CD4-positive, alpha-beta T cell (primary cell): ENCODE measurements at regions of chr19 and their contacts with region 1.

Region 1: DNA sequence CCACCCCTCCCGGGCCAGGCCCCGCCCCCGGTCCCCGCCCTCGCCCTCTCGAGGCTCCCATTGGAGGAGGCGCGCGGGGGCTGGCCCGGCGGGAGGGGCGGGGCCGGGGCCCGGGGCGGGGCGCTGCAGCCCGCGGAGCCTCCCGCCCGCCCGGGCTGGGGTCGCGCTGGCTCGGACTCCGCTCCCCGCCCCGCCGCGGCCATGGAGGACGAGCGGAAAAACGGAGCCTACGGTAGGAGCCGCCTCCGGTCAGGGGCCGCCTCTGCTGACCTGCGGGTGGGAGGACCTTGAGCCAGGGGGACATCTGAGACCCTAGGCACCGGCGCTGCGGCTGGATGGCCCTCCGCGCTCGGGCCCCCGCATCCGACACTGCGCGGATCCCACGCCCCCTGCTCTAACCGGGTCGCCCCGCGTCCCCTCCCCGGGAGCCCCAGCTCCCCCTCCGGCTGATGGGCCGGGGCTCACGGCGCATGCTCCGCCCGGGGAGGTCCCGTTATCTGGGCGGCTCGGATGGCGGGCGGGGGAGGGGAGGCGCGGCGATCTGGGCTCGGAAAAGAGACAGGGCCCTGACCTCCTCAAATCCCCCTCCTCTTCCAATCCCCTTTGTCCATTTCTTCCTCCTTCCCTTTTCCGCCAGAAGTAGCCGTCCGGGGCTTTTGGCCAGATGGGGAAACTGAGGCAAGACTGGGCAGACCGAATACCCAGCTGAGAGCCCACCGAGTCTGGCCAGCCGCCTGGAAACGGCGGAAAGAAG is 15.4 kb upstream of the AP1M2 start:
- DNase-seq: peak; percentile 79 to 96 (median 88)
- ATAC-seq: peak; percentile 79
- H3K4me3 ChIP-seq: peak overlapping the region; percentile 96
- H3K4me3 Mint-ChIP-seq: peak overlapping the region; percentile 100
- H3K27ac ChIP-seq: peak overlapping the region; percentile 99 to 100
- H3K27ac Mint-ChIP-seq: peak overlapping the region; percentile 95
- H3K4me1 ChIP-seq: peaks cover 44% of the 10 kb centered on the region
- H3K4me1 Mint-ChIP-seq: peaks cover 35% of the 10 kb centered on the region
- H3K27me3 ChIP-seq: no peaks in the 10 kb centered on the region
- H3K27me3 Mint-ChIP-seq: no peaks in the 10 kb centered on the region
- CTCF ChIP-seq: no peak

Region 2: DNA sequence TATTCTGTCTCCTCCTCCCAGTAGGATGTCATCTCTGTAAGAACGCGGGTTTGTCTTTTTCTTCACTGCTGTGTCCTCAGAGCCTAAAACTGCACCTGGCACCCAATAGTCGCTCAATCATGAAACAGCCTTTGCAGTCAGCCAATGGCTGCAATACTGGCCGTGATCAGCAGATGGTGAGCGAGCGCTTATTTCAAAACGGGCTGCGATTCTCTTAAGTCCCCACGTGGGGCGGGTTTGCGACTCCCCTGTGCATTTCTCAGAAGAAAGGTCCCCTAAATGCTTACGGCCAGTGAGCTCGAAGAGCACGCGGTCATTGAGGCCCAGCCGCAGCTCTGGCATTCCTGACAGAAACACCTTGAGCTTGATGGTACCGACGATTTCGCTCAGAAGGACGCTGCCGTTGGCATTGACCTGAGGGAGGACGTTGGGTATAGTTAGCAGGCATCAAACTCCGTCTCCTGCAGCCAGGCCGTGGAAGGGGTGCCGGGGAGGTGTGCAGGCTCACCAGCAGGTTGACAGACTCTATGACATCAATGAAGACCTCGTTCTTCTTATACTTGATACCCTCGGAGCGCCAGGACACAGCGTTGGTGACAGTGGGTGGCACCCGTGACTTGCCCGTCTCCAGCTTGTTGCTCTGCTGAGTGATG is 21.4 kb before region 1 on chr19:
- CTCF ChIA-PET with region 1: interaction called, 24 read pairs
- POLR2A ChIA-PET with region 1: interaction called, 27 read pairs
- intact Hi-C with region 1: loop called (anchors 1 to 2 kb)
- DNase-seq: peak; percentile 81 to 95 (median 89)
- ATAC-seq: peak; percentile 97
- H3K4me3 ChIP-seq: no peak overlapping the region
- H3K4me3 Mint-ChIP-seq: no peak overlapping the region
- H3K27ac ChIP-seq: no peak overlapping the region
- H3K27ac Mint-ChIP-seq: no peak overlapping the region
- H3K4me1 ChIP-seq: peaks cover 18% of the 10 kb centered on the region
- H3K4me1 Mint-ChIP-seq: peaks cover 25% of the 10 kb centered on the region
- H3K27me3 ChIP-seq: no peaks in the 10 kb centered on the region
- H3K27me3 Mint-ChIP-seq: no peaks in the 10 kb centered on the region
- CTCF ChIP-seq: peak; percentile 99

Region 3: DNA sequence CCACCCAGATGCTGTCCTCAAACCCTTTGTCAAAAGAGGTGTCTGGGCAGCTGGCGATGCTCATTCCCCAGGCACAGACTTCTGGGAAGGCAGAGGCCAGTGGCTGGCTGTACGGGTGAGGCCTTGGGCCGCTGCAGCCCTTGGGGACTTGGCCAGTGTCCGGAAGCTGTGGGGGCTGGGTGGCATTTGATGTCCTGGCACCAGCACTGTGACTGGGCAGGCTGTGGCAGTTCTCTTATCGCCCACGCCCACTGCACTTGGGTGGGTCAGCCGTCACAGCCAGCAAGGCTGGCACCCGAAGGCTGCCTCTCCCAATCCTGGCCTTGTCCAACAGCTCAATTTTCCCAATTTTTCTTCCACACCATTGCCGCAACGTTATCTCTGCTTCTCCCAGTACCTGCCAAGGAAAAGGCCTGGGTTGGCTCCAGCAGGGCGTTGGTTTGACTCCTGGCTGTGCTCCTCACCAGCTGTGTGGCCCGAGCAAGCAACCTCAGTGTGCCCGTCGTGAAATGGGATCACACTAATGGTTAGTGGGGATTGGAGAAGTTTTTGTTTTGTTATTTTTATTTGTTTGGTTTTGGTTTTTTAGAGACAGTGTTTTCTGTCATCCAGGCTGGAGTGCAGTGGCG is 10.1 kb after region 1 on chr19:
- CTCF ChIA-PET with region 1: no interaction called
- POLR2A ChIA-PET with region 1: interaction called, 27 read pairs
- intact Hi-C with region 1: no loop called
- DNase-seq: no peak
- ATAC-seq: no peak
- H3K4me3 ChIP-seq: no peak overlapping the region
- H3K4me3 Mint-ChIP-seq: no peak overlapping the region
- H3K27ac ChIP-seq: peak overlapping the region in 1 of 2 donors; percentile 2
- H3K27ac Mint-ChIP-seq: peak overlapping the region; percentile 49
- H3K4me1 ChIP-seq: peaks cover 52% of the 10 kb centered on the region
- H3K4me1 Mint-ChIP-seq: peaks cover 28% of the 10 kb centered on the region
- H3K27me3 ChIP-seq: no peaks in the 10 kb centered on the region
- H3K27me3 Mint-ChIP-seq: no peaks in the 10 kb centered on the region
- CTCF ChIP-seq: no peak

Region 4: DNA sequence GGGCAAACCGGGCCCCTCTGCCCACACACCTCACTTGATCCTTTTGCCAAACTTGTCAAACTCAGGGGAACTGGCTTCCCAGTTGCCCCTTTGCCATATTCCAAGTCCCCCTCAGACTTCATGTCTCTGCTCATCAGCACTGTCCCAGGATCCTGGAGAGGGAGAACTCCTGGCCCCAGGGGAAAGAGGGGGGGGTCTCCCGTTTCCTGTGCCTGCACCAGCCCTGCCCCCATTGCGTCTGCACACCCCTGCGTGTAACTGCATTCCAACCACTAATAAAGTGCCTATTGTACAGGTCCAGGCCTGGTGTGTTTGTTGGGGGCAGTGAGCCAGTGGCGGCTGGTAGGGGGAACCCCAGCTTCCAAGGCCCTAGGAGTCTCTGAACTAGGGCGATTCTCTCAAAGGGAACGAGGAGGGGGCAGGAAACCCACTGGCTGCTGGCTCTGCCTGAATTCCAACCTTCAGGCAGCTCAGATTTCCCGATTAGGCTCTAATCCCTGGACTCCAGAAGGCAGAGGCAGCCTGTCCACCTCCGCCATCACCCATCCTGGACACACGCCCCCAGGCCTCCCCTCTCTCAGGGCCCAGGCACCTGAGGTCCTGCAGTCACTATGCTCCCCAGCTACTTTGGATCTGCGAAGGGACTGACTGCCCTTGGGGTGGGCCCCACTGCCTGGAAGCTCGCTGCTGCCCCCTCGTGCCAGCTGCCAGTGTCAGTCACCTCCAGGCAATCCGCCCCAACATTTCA is 41.9 kb after region 1 on chr19:
- CTCF ChIA-PET with region 1: interaction called, 27 read pairs
- POLR2A ChIA-PET with region 1: interaction called, 82 read pairs
- intact Hi-C with region 1: loop called in 1 of 2 experiments (anchors 5 kb)
- DNase-seq: peak; percentile 79 to 91 (median 84)
- ATAC-seq: peak; percentile 97
- H3K4me3 ChIP-seq: no peak overlapping the region
- H3K4me3 Mint-ChIP-seq: peak overlapping the region; percentile 48
- H3K27ac ChIP-seq: peak overlapping the region; percentile 4 to 34
- H3K27ac Mint-ChIP-seq: peak overlapping the region; percentile 80
- H3K4me1 ChIP-seq: peaks cover 29% of the 10 kb centered on the region
- H3K4me1 Mint-ChIP-seq: peaks cover 31% of the 10 kb centered on the region
- H3K27me3 ChIP-seq: no peaks in the 10 kb centered on the region
- H3K27me3 Mint-ChIP-seq: no peaks in the 10 kb centered on the region
- CTCF ChIP-seq: peak; percentile 87

Region 5: GRCh38 chr19:10835754-10836477 is 233.4 kb after region 1 on chr19 and contains the start of gene TMED1:
- CTCF ChIA-PET with region 1: no interaction called
- POLR2A ChIA-PET with region 1: interaction called, 21 read pairs
- intact Hi-C with region 1: no loop called
- DNase-seq: peak; percentile 85 to 98 (median 90)
- ATAC-seq: peak; percentile 86
- H3K4me3 ChIP-seq: peak within 1 kb of the TSS; percentile 71
- H3K4me3 Mint-ChIP-seq: peak within 1 kb of the TSS; percentile 98
- H3K27ac ChIP-seq: peak within 1 kb of the TSS; percentile 96
- H3K27ac Mint-ChIP-seq: peak within 1 kb of the TSS; percentile 100
- H3K4me1 ChIP-seq: peaks cover 21% of the 10 kb centered on the region
- H3K4me1 Mint-ChIP-seq: peaks cover 15% of the 10 kb centered on the region
- H3K27me3 ChIP-seq: no peaks in the 10 kb centered on the region
- H3K27me3 Mint-ChIP-seq: no peaks in the 10 kb centered on the region
- CTCF ChIP-seq: no peak
- total RNA-seq, gene TMED1: 6.7 to 7.0 TPM